ENCODE measurements at regions of chr1 and their contacts with region 1.

Region 1: DNA sequence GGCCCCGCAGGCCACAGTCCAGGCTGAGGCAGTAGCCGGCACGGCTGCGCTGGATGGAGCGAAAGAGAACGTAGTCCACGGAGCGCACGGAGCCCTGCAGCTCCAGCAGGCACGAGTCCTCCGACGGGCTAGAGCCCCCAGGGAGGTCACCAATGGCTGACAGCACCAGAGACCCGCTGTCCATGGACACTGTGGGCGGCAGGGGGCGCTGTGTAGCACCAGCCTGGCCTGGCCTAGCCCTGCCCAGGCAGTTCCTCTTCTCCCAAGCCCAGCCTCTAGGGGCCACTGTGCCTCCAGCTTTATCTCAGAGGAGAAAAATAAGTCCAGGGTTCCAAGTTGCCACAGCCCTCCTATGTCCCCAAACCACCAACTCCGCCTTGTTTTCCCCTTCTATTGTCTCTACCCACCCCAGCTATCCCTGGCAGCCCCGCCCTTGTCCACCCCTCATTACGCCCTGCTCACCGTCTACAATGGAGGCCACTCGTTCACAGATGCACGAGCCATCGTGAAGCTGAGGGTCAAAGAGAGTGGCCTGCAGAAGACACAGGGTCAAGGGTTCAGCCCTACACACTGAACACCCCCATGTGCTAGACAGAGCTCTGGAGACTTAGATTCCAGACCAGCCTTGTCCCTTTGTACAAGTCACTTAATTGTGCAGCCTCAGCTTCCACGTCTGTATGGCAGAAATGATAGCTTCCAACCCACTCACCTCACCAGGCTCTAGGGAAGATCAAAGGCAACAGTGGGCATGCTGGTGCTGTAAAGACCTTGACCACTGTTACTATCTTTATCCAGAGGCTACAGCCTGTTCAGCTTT is 4.4 kb downstream of the ENTREP3 start:
- DNase-seq: no peak
- ATAC-seq: peak; percentile 89
- H3K4me3 ChIP-seq: no peak overlapping the region
- H3K27ac ChIP-seq: peak overlapping the region; percentile 9; the same call in 1 of the 2 replicates
- H3K4me1 ChIP-seq: peaks cover 7% of the 10 kb centered on the region
- H3K27me3 ChIP-seq: no peaks in the 10 kb centered on the region
- CTCF ChIP-seq: peak; percentile 100

Region 2: GRCh38 chr1:155172732-155173477 is 77.9 kb before region 1 on chr1 and contains the start of gene KRTCAP2:
- CTCF ChIA-PET with region 1: no interaction called
- POLR2A ChIA-PET with region 1: no interaction called
- in situ Hi-C with region 1: no loop called
- intact Hi-C with region 1: no loop called
- DNase-seq: peak; percentile 89
- ATAC-seq: peak; percentile 81
- H3K4me3 ChIP-seq: peak within 1 kb of the TSS; percentile 88 to 89
- H3K27ac ChIP-seq: peak within 1 kb of the TSS; percentile 92
- H3K4me1 ChIP-seq: peaks cover 24% of the 10 kb centered on the region
- H3K27me3 ChIP-seq: no peaks in the 10 kb centered on the region
- CTCF ChIP-seq: peak; percentile 97
- total RNA-seq, gene KRTCAP2: 155 TPM

Region 3: DNA sequence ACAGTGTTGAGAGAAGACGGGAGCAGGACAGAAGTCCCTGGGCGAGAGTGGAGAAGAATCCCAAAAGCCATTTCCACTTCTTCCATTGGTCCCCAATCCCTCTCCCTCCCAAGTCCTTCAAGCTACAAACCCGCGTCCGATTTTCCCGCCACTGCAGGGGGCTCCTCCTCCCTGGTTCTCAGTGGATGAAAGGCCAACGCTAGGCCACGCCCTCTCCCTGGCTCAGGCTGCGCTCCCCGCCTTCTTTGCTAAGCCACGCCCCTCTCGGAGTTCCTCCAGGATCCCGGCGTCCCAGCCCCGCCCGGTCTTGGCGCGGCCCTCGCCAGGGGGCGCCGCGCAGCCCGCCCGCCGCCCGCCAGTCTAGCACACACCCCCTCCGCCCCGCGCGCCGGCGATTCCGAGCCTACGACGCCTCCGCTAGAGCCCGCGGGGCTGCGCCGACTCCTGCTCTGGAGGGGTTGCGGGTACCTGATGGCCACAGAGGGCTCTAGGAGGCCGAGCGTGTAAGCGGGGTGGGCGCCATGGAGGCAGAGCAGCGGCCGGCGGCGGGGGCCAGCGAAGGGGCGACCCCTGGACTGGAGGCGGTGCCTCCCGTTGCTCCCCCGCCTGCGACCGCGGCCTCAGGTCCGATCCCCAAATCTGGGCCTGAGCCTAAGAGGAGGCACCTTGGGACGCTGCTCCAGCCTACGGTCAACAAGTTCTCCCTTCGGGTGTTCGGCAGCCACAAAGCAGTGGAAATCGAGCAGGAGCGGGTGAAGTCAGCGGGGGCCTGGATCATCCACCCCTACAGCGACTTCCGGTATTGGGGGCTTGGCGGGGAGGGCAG is 26.4 kb after region 1 on chr1 and contains the start of gene HCN3:
- CTCF ChIA-PET with region 1: interaction called, 13 read pairs
- POLR2A ChIA-PET with region 1: interaction called, 5 read pairs
- in situ Hi-C with region 1: no loop called
- intact Hi-C with region 1: no loop called
- DNase-seq: peak; percentile 88
- ATAC-seq: peak; percentile 82
- H3K4me3 ChIP-seq: peak within 1 kb of the TSS; percentile 70 to 80
- H3K27ac ChIP-seq: peak within 1 kb of the TSS; percentile 56
- H3K4me1 ChIP-seq: peaks cover 16% of the 10 kb centered on the region
- H3K27me3 ChIP-seq: no peaks in the 10 kb centered on the region
- CTCF ChIP-seq: peak; percentile 95
- total RNA-seq, gene HCN3: 7.8 TPM

Region 4: GRCh38 chr1:155323798-155324610 is 73.2 kb after region 1 on chr1:
- CTCF ChIA-PET with region 1: interaction called, 34 read pairs
- POLR2A ChIA-PET with region 1: interaction called, 3 read pairs
- in situ Hi-C with region 1: no loop called
- intact Hi-C with region 1: no loop called
- DNase-seq: peak; percentile 87
- ATAC-seq: peak; percentile 76
- H3K4me3 ChIP-seq: peak overlapping the region; percentile 92 to 96
- H3K27ac ChIP-seq: peak overlapping the region; percentile 95
- H3K4me1 ChIP-seq: peaks cover 47% of the 10 kb centered on the region
- H3K27me3 ChIP-seq: no peaks in the 10 kb centered on the region
- CTCF ChIP-seq: no peak

Region 5: GRCh38 chr1:155339515-155340097 is 88.8 kb after region 1 on chr1:
- CTCF ChIA-PET with region 1: no interaction called
- POLR2A ChIA-PET with region 1: interaction called, 13 read pairs
- in situ Hi-C with region 1: no loop called
- intact Hi-C with region 1: no loop called
- DNase-seq: no peak
- ATAC-seq: no peak; the same call in 1 of the 2 replicates
- H3K4me3 ChIP-seq: no peak overlapping the region
- H3K27ac ChIP-seq: no peak overlapping the region
- H3K4me1 ChIP-seq: no peaks in the 10 kb centered on the region
- H3K27me3 ChIP-seq: no peaks in the 10 kb centered on the region
- CTCF ChIP-seq: no peak